Esophagus squamous epithelium (tissue), 5 donors: ENCODE measurements at regions of chr14 and their contacts with region 1.

Region 1: GRCh38 chr14:103808403-103809001 is 38.9 kb downstream of the PPP1R13B start:
- DNase-seq: no peak
- H3K4me3 ChIP-seq: no peak overlapping the region
- H3K27ac ChIP-seq: no peak overlapping the region
- H3K4me1 ChIP-seq: peaks cover 0 to 39% (median 12%) of the 10 kb centered on the region in 3 donors
- H3K27me3 ChIP-seq: no peaks in the 10 kb centered on the region
- CTCF ChIP-seq: peak; percentile 70 to 92 (median 84)
- POLR2A ChIP-seq: no peak

Region 2: DNA sequence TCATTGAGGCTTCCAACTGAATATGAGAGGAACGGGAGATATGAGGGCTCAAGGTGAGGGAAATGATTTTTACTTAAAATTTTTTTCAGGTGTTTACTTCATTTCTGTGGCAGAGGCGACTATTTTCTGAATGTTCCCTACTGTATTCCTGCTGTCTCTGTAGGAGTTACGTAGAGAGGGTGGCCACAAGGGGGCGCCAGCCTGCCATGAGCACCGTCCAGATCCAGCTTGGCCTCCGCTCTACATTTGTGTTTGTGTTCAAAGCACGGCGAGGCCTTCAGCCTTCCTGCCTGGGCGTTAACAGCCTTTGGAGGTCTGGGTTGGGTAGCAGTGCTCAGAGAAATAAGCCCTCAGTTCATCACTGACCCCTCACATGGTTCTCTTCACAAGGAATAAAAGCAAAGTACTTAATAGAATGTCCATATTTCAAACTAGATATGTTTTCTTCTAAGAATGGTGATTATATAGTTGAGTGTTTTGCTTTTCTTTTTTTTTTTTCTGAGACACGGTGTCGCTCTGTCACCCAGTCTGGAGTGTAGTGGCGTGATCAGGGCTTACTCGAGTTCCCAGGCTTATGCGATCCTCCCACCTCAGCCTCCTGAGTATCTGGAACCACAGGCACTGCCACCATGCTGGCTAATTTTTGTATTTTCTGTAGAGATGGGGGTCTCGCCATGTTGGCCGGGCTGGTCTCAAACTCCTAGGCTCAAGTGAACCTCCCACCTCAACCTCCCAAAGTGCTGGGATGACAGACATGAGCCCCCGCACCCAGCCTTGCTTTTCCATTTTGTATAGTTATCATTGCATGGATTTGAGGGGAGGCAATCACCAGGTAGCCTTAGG is 308.1 kb before region 1 on chr14:
- intact Hi-C with region 1: no loop called
- DNase-seq: no peak
- H3K4me3 ChIP-seq: no peak overlapping the region
- H3K27ac ChIP-seq: peak overlapping the region in 3 of 4 donors; percentile 1 to 53 (median 41)
- H3K4me1 ChIP-seq: peaks cover 0 to 20% (median 0%) of the 10 kb centered on the region in 3 donors
- H3K27me3 ChIP-seq: no peaks in the 10 kb centered on the region
- CTCF ChIP-seq: peak; percentile 82 to 95 (median 90)
- POLR2A ChIP-seq: no peak

Region 3: GRCh38 chr14:103905842-103906456 is 97.4 kb after region 1 on chr14:
- intact Hi-C with region 1: loop called (anchors 5 kb)
- DNase-seq: no peak
- H3K4me3 ChIP-seq: no peak overlapping the region
- H3K27ac ChIP-seq: no peak overlapping the region
- H3K4me1 ChIP-seq: peaks cover 0 to 19% (median 11%) of the 10 kb centered on the region in 3 donors
- H3K27me3 ChIP-seq: no peaks in the 10 kb centered on the region
- CTCF ChIP-seq: no peak
- POLR2A ChIP-seq: no peak